Left colon (tissue), 2 donors: ENCODE measurements at regions of chr3 and their contacts with region 1.

Region 1: GRCh38 chr3:52123106-52123725 is 31.0 kb downstream of the POC1A start:
- DNase-seq: peak; percentile 47 to 78
- ATAC-seq: peak; percentile 97

Region 2: DNA sequence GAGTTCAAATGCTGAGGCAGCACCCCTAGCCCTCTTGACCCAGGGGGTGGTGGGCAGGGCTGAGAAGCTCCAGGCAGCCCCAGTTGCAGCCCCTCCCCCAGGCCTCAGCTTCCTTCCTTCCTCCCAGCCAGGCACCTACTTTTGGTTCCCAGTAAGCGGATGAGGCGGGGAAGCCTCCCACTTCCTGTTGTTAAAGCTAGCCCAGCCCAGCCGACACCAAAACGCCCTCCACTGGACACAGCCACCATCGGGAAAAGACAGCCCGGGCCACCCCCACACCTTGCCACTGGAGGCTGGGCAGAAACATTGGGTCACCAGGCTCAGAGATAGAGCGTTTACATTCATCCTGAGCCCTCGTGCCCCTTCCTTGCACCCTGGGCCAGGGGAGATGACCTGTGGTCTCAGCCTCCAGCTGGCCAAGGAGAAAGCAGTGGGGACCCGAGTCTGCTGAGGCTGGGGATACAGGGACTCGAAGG is 70.3 kb before region 1 on chr3:
- intact Hi-C with region 1: loop called in 1 of 2 experiments (anchors 2 kb)
- DNase-seq: peak; percentile 85 to 88
- ATAC-seq: peak; percentile 19

Region 3: DNA sequence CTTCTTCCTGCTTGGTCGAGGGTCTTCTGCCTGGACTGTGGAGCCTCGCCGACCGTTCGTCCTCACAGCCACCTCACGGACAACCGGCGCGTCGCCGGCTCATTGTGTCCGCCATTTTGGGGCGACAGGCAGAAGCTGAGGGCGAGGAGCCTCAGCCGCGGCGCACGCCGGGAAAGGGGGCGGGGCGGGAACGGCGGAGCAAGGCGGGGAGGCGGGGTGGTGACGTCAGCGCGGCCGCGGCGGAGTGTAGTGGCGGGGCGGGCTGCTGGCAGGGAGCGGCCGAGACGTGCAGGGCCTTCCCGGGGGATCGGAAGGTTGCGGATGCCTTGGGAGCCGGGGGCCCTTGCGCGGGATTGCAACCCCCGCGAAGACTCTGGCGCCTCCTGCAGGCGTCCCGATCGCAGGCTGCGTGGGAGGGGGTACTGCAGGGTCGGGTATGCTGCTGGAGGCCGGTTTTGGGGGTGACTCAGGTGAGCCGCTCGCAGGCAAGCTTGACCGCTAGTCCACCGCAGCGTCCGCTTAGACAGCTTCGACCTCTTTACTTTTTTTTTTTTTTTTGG is 155.4 kb after region 1 on chr3 and contains the start of gene WDR82:
- intact Hi-C with region 1: no loop called
- DNase-seq: peak; percentile 96 to 99
- ATAC-seq: peak; percentile 90
- total RNA-seq, gene WDR82: 57.1 to 60.9 TPM